Left ventricle myocardium inferior (tissue), 1 donor: ENCODE measurements at regions of chr17 and their contacts with region 1.

Region 1: DNA sequence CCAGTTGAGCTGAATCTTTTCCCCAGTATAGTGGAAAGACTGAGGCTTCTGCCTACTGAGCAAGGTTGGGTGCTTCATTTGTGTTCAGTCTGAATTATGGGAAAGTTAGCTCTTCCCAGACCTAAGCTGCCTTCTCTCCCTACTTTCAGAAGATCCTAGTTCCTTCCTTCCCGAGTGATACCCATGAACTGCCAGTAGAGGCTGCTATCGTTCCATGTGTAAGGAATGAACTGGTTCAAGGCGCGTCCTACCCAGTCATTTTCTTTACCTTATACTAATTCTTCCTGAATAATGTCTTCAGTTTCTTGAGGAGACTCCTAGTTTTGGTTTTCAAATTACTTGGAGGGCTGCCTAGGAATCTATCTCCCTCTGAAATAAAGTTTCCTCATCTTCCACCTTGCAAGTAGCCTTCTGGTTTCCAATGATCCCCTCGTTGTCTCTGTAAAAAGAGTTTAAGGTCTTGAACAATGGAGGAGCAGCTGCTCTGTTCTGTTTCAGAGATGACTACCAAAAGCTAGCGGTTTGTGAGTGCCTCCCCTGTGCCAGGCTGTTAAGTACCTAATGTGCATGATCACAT is 934 bp upstream of the AOC2 start:
- DNase-seq: no peak
- H3K4me3 ChIP-seq: no peak overlapping the region
- H3K27ac ChIP-seq: no peak overlapping the region
- H3K4me1 ChIP-seq: peaks cover 24% of the 10 kb centered on the region
- H3K27me3 ChIP-seq: no peaks in the 10 kb centered on the region
- CTCF ChIP-seq: peak; percentile 93

Region 2: DNA sequence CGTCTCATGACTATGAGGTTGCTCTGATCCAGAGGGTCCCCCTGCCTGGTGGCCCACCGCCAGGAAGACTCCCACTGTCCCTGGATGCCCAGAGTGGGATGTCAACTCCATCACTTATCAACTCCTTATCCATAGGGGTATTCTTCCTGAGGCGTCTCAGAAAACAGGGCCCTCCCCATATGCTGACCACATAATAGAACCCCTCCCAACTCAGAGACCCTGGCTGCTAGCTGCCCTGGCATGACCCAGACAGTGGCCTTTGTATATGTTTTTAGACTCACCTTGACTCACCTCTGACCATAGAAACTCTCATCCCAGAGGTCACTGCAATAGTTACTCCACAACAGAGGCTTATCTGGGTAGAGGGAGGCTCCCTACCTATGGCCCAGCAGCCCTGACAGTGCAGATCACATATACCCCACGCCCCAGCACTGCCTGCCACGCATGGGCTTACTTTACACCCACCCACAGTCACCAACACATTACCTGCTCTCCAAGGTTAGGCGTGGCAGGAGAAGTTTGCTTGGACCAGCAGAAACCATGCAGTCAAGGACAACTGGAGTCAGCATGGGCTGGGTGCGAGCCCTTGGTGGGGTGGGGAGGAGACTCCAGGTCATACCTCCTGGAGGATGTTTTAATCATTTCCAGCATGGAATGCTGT is 54.8 kb after region 1 on chr17:
- intact Hi-C with region 1: no loop called
- DNase-seq: no peak
- H3K4me3 ChIP-seq: no peak overlapping the region
- H3K27ac ChIP-seq: no peak overlapping the region
- H3K4me1 ChIP-seq: peaks cover 24% of the 10 kb centered on the region
- H3K27me3 ChIP-seq: no peaks in the 10 kb centered on the region
- CTCF ChIP-seq: no peak

Region 3: DNA sequence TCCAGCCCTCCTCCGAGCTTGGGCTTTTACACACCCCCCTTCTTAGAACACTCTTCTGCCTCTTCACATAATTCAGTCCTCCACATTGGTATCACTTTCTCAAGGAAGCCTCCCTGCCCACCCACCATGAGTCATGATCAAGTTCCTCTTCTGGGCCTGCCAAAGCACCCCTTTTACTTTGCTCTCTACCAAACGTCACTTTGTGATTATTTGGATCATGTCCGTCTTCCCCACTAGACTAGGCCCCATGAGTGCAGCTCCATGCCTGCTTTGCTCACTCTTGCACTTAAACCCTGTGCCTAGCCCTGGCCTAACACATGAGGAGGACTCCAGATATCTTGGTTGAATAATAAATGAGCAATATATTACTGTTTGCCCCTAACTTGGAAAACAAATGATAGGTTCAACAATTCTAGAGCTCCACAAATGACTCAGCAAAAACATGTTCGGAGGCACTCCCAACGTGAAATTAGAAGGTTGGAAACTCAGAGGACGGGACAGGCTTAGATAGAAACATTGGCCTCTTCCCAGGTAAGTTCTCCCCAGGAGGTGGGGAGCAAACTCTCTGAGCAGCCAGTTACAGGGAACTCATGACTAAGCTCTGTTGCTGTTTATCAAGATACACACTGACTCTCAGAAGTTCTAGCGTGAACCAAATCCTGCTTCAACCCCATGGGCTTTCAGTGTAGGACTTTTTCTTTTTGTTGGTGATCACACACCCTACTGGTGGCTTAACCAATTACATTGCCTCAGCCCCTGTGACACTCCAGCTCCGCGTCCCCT is 85.5 kb after region 1 on chr17:
- intact Hi-C with region 1: loop called (anchors 2 kb)
- DNase-seq: no peak
- H3K4me3 ChIP-seq: no peak overlapping the region
- H3K27ac ChIP-seq: peak overlapping the region; percentile 31
- H3K4me1 ChIP-seq: peaks cover 15% of the 10 kb centered on the region
- H3K27me3 ChIP-seq: peaks cover 7% of the 10 kb centered on the region
- CTCF ChIP-seq: peak; percentile 77